ENCODE measurements at regions of chr11 and their contacts with region 1.

Region 1: GRCh38 chr11:73453562-73453961 is 77.4 kb downstream of the RELT start:
- DNase-seq: no peak
- CTCF ChIP-seq: no peak

Region 2: DNA sequence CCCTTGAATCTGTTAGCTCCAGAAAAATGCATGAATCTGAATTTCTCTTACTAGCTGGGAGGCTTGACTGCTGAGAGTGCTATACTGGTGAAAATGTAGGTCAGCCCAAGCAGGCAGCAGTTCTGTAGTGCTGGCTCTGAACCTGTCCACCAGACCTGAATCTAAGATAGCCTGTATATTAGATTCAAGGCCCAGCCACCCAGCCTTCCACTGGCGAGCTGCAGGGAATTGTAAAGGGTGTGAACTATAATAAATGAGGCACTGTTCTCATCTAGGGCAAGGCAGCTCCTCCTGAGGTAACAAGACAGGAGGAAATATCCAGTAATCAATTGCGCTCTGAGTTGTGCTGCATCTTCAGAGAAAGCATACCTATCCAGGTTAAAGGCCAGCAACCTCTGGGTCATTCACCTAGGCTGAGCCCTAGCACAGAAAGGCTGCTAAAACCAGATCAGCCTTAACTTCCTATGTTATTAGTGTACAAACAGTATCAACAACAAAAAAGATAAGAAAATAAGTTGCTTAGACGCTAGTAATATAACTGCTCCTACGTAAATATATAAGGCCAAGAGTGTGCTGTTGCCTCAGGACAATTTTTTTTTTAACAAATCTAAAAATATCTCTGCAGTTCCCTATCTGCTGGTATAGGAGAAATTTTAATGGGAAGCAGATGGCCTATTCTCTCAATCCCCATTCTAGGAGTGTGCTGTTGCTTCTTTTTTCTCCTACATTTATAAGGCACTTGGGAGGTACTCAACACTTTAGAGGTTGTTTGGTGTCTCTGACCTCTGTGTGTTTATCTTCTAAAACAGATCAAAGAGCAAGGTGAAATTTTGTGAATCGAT is 14.3 kb before region 1 on chr11:
- CTCF ChIA-PET with region 1: interaction called, 13 read pairs
- POLR2A ChIA-PET with region 1: no interaction called
- DNase-seq: no peak
- CTCF ChIP-seq: no peak

Region 3: DNA sequence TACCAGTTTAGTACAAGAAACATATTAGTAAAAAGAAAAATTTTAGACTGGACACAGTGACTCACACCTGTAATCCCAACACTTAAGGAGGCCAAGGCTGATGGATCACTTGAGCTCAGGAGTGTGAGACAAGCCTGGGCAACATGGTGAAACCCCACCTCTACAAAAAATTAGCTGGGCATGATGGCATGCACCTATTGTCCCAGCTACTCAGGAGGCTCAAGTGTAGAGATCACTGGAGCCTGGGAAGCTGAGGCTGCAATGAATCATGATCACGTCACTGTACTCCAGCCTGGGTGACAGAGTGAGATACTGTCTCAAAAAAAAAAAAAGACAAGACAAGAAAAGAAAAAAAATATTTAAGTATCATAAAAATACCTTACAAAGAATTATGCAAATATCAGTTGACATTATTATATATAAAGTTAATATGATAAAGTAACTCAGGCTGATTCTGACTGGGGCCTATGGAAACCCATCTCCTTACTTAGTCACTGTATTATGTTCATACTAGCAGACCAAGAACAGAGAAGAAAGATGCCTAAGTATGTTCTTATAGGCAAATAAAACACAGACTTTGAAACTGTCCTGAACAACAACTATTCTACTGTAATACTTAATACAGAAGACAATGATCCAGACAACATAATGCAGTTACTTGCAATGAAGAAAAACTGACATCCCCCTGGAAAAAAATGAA is 117.0 kb after region 1 on chr11:
- CTCF ChIA-PET with region 1: no interaction called
- POLR2A ChIA-PET with region 1: no interaction called
- DNase-seq: no peak
- CTCF ChIP-seq: no peak

Region 4: DNA sequence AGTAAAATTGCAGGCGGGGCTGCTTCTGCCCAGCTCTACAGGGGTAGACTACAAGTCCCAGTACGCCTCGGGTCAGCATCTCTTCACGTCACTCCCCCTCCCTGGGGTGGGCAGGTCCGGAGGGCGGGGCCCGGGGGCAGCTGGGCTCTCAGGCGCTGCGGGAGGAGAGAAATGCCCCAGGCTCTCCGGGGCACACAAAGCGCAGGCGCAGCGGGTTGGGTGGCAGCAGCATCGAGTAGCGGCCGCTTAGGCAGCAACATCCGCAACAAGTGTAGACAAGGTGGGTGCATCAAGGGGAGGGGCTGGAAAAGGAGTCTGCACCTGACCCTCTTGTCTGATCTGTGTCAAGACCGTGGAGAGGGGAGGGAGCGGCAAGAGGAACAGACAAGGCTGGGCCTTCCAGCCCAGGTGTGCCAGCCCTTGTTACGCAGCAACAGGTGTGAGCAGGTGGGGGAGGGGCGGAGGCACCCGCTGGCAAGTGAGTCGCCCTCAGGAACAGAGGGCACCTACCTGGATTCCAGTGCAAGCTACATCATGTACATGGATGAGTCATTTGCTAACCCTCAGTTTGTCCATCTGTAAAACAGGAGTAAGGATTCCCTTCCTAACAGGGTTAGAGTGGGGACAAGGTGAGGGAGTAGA is 194.0 kb after region 1 on chr11:
- CTCF ChIA-PET with region 1: no interaction called
- POLR2A ChIA-PET with region 1: interaction called, 10 read pairs
- DNase-seq: peak; percentile 91
- CTCF ChIP-seq: no peak